ENCODE measurements at regions of chr7 and their contacts with region 1.

Region 1: GRCh38 chr7:87312215-87312865 is 33.1 kb upstream of the CROT start:
- DNase-seq: peak; percentile 52 to 66
- ATAC-seq: peak; percentile 84 to 93
- H3K4me3 ChIP-seq: no peak overlapping the region
- H3K27ac ChIP-seq: no peak overlapping the region
- H3K4me1 ChIP-seq: peaks cover 14% of the 10 kb centered on the region
- CTCF ChIP-seq: peak; percentile 96
- EP300 ChIP-seq: no peak
- POLR2A ChIP-seq: no peak
- RAD21 ChIP-seq: peak; percentile 95 to 98

Region 2: DNA sequence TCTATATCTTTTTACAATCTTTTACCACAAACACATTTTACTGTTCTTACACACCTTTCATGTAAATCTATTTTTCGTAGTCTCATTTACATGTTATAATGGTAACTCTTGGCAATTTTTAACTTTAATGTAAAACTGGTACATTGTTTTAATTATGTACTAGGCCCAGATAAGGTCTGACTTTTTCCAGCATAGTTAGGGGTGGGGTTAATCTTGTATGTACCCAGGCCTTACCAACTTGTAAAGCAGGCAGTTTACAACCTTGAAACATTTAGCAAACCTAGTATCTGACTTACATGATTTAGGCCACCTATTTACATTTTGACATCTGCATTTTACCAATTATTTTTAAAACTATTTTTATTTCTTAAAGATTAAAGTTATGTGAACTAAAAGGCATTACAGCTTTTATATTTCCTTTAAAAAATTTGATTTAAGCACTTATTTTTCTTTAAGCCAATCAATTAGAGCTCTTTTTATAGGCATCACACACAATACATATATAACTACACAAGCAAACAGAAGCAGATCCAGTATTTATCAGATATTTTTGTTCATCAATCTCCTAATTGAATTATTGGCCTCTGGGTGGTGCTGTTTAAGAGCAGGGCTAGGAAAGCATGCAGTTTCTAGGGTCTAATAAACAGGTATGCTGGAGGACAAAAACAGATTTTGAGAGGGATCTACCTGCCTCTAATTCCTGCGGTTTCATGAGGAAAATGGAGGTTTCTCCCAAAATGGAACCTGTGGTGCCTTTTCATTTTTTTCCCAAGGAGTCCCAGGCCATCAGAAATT is 13.4 kb after region 1 on chr7:
- CTCF ChIA-PET with region 1: interaction called, 10 read pairs
- POLR2A ChIA-PET with region 1: no interaction called
- DNase-seq: no peak
- ATAC-seq: no peak
- H3K4me3 ChIP-seq: no peak overlapping the region
- H3K27ac ChIP-seq: no peak overlapping the region
- H3K4me1 ChIP-seq: no peaks in the 10 kb centered on the region
- CTCF ChIP-seq: no peak
- EP300 ChIP-seq: no peak
- POLR2A ChIP-seq: no peak
- RAD21 ChIP-seq: no peak

Region 3: GRCh38 chr7:87416682-87417587 is 104.6 kb after region 1 on chr7:
- CTCF ChIA-PET with region 1: interaction called, 195 read pairs
- POLR2A ChIA-PET with region 1: interaction called, 4 read pairs
- DNase-seq: peak in 1 of 2 experiments; percentile 67
- ATAC-seq: peak; percentile 49 to 85; a peak in 3 of 6 replicates
- H3K4me3 ChIP-seq: no peak overlapping the region
- H3K27ac ChIP-seq: no peak overlapping the region
- H3K4me1 ChIP-seq: peaks cover 20% of the 10 kb centered on the region; the same call in 2 of the 3 replicates
- CTCF ChIP-seq: peak; percentile 92
- EP300 ChIP-seq: no peak
- POLR2A ChIP-seq: no peak
- RAD21 ChIP-seq: peak; percentile 92 to 95